ENCODE measurements at regions of chr4 and their contacts with region 1.

Region 1: GRCh38 chr4:73653695-73654106 is 33.5 kb upstream of the RASSF6 start:
- DNase-seq: peak; percentile 91
- H3K4me3 ChIP-seq: no peak overlapping the region
- H3K27ac ChIP-seq: no peak overlapping the region
- H3K4me1 ChIP-seq: no peaks in the 10 kb centered on the region
- H3K27me3 ChIP-seq: no peaks in the 10 kb centered on the region
- CTCF ChIP-seq: peak; percentile 33 to 41
- POLR2A ChIP-seq: no peak

Region 2: GRCh38 chr4:73308286-73308685 is 345.4 kb before region 1 on chr4:
- CTCF ChIA-PET with region 1: interaction called, 11 read pairs
- POLR2A ChIA-PET with region 1: no interaction called
- dilution Hi-C with region 1: no loop called
- intact Hi-C with region 1: loop called (anchors 1 kb)
- DNase-seq: peak; percentile 20
- H3K4me3 ChIP-seq: no peak overlapping the region
- H3K27ac ChIP-seq: no peak overlapping the region
- H3K4me1 ChIP-seq: peaks cover 2% of the 10 kb centered on the region
- H3K27me3 ChIP-seq: peaks cover 0 to 2% of the 10 kb centered on the region in 2 experiments
- CTCF ChIP-seq: no peak
- POLR2A ChIP-seq: no peak

Region 3: GRCh38 chr4:73341454-73341853 is 312.2 kb before region 1 on chr4:
- CTCF ChIA-PET with region 1: interaction called, 16 read pairs
- POLR2A ChIA-PET with region 1: no interaction called
- dilution Hi-C with region 1: no loop called
- intact Hi-C with region 1: loop called (anchors 5 kb)
- DNase-seq: peak; percentile 34
- H3K4me3 ChIP-seq: no peak overlapping the region
- H3K27ac ChIP-seq: no peak overlapping the region
- H3K4me1 ChIP-seq: no peaks in the 10 kb centered on the region
- H3K27me3 ChIP-seq: peaks cover 0 to 3% of the 10 kb centered on the region in 2 experiments
- CTCF ChIP-seq: peak in 1 of 2 donors; percentile 29
- POLR2A ChIP-seq: no peak

Region 4: GRCh38 chr4:73593631-73594241 is 60.0 kb before region 1 on chr4:
- CTCF ChIA-PET with region 1: interaction called, 122 read pairs
- POLR2A ChIA-PET with region 1: no interaction called
- dilution Hi-C with region 1: no loop called
- intact Hi-C with region 1: loop called (anchors 1 kb)
- DNase-seq: peak; percentile 55
- H3K4me3 ChIP-seq: no peak overlapping the region
- H3K27ac ChIP-seq: no peak overlapping the region
- H3K4me1 ChIP-seq: no peaks in the 10 kb centered on the region
- H3K27me3 ChIP-seq: no peaks in the 10 kb centered on the region
- CTCF ChIP-seq: peak; percentile 33 to 42
- POLR2A ChIP-seq: no peak

Region 5: DNA sequence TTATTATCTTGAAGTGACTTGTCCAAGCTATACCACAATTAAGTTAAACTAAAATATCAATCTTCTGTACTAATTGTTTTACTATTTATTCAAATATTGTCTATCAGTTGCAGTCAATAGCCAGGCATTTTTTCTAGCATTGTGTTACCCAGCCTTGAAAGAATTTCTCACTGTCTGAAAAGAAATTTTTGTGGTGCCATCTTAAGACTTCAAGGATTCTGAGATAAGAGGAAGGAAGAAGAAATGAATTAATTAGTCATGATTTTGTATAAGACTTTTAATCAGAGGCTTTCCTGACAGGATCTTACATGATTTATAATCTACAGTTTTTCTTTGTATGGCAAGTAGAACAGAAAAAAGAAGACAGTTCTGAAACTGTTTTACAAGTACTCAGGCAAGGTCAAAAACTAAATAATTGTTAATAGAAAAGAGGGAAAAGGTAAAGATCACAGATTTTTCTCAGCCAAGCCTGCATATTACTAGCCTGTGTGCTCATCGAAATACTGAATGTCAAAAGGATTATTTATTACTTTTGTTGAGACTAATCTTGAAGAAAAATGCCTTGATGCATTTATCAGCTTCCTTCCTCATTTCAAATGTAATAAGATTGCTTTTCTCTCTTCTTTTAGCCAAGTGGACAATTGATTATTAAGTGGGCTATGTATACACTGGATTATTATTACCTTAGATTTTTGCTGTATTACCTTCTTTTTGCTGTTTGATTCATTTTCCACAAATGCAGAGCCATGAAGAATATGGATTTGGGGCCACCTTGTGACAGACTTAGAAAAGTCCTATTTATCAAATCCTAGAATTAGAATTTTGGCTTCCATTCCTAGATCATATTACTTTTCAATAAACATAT is 269.3 kb after region 1 on chr4:
- CTCF ChIA-PET with region 1: interaction called, 16 read pairs
- POLR2A ChIA-PET with region 1: no interaction called
- dilution Hi-C with region 1: no loop called
- intact Hi-C with region 1: no loop called
- DNase-seq: peak; percentile 76
- H3K4me3 ChIP-seq: no peak overlapping the region
- H3K27ac ChIP-seq: no peak overlapping the region
- H3K4me1 ChIP-seq: peaks cover 10% of the 10 kb centered on the region
- H3K27me3 ChIP-seq: no peaks in the 10 kb centered on the region
- CTCF ChIP-seq: peak; percentile 9 to 14
- POLR2A ChIP-seq: no peak

Region 6: DNA sequence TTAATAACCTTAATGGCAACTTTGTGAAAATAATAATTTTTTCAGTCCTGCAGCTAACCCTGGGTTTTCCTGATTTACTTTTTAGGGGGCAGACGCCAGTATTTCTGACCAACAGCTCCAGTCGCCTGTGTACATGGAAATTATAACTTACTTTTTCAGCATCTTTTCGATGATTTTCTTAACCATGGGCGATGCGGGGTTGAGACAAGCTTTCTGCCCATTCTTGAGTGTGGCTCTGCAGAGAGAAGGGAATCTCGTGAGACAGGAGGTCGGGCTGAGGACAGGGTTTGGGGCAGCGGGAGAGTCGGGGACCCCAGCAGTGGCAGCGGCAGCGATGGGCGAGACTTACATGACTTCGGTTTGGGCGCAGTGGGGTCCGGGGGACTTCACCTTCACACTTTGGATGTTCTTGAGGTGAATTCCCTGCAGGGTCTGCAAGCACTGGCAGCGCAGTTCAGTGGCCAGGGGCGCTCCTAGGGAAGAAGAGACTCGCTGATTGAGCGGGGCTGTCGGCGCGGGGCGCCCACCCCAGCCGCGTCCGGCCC is 444.8 kb after region 1 on chr4:
- CTCF ChIA-PET with region 1: interaction called, 10 read pairs
- POLR2A ChIA-PET with region 1: no interaction called
- dilution Hi-C with region 1: no loop called
- intact Hi-C with region 1: no loop called
- DNase-seq: peak; percentile 38
- H3K4me3 ChIP-seq: peak overlapping the region; percentile 46 to 85 (median 69)
- H3K27ac ChIP-seq: peak overlapping the region; percentile 83
- H3K4me1 ChIP-seq: peaks cover 32% of the 10 kb centered on the region
- H3K27me3 ChIP-seq: no peaks in the 10 kb centered on the region
- CTCF ChIP-seq: no peak
- POLR2A ChIP-seq: no peak

Measured in endothelial cell of umbilical vein (primary cell).